Left cardiac atrium (tissue), 4 donors: ENCODE measurements at regions of chr18 and their contacts with region 1.

Region 1: DNA sequence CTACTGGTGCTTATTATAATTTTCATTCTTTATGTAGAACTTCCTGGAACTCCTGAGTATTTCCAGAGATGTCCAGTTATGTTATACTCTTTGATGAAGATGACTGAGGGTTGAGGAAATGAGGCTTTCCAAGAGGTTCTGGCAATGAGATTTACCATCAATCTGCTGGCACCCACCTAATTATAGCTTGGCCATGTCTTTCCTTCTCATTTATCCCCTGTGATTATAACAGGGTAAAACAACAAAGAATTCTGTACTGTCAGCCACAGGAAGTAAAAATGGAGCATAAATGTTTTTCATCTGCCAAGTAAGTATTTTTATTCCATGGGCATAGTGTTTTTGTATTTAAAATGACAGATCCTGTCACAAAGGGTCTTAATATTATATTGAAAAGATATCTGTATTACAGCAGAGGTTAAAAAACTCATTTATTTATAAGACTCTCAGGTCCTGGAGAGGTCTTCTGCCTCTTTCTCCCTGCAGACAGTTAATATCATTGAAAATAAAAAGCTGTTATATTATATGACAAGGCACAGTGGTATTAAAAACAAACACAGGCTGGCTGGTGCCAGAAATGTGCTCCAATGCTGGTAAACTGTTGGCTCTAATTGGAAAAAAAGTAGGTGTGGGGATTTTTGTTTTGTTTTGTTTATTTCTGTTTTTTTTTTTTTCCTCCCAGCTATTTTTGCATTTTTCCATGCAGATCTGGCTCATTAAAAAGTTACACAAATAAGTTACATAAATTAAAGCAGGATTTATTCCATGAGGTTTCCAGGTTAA is 1764.1 kb upstream of the CELF4 start:
- DNase-seq: no peak
- ATAC-seq: no peak

Region 2: DNA sequence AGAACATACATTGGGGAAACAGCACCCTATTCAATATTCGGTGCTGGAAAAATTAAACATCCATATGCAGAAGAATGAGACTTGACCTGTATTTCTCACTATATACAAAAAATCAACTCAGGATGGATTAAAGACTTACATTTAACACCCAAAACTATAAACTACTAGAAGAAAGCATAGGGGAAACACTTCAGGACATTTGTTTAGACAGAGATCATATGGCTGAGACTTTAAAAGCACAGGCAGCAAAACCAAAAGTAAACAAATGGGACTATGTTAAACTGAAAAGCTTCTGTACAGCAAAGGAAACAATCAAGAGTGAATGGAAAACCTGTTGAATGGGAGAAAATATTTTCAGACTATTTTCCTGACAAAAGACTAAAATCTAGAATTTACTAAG is 70.0 kb before region 1 on chr18:
- intact Hi-C with region 1: loop called in 1 of 2 experiments (anchors 10 kb)
- DNase-seq: no peak
- ATAC-seq: no peak